Activated CD4-positive, alpha-beta memory T cell treated with anti-CD3 and anti-CD28 coated beads for 36 hours (primary cell): ENCODE measurements at regions of chr10 and their contacts with region 1.

Region 1: GRCh38 chr10:70404036-70404786 is at the start of gene EIF4EBP2:
- DNase-seq: peak; percentile 100
- H3K4me3 Mint-ChIP-seq: peak within 1 kb of the TSS; percentile 95
- H3K27ac Mint-ChIP-seq: peak within 1 kb of the TSS; percentile 91
- H3K4me1 Mint-ChIP-seq: peaks cover 37% of the 10 kb centered on the region
- H3K27me3 Mint-ChIP-seq: no peaks in the 10 kb centered on the region
- total RNA-seq, gene EIF4EBP2: 27.1 to 27.5 TPM

Region 2: DNA sequence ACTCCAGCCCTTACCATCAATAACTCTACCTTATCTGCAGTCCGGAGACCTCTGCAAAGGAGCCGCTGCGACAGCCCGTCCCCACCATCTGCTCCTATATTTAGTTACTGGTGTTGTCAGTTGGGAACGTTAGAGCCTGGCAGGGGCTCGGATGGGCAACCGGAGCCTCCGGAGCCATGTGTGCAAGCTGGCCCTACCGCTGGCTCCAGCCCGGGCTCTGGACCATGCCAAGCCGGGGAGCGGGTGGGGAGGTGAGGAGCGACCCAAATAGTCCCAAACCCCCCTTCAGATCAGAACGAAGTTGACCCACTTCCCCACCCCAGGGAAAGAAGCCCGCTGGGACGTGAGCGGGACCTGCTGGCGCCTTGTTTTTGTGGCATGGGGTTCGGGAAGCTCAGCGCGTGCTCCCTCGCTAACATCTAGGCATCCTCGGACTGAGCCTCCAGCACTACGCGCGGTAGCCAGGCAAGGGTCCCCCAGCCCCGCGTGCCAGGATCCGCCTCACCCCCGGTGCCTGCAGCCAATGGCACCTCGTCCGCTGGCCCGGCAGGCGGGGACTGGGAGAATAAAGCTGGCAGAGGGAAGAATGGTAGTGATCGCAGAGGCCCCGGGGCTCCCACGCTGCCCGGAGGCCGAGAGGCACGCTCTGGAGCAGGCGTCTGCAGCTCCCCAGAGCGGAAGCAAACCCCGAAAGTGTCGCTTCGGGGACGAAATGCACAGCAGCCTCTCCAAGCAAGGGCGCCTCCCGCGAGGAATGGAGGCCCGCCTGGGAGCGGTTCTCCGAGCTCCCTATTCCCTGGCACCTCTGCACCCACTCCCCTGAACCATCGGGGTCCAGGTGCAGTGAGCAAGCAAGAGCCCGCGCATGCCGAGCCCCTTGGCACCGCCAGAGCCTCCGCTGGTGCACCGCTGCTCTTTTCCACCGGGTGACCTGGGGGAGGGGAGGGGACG is 22.5 kb before region 1 on chr10:
- CTCF ChIA-PET with region 1: interaction called, 49 read pairs
- POLR2A ChIA-PET with region 1: interaction called, 13 read pairs
- intact Hi-C with region 1: loop called (anchors 1 kb)
- DNase-seq: peak; percentile 48
- H3K4me3 Mint-ChIP-seq: peak overlapping the region; percentile 77
- H3K27ac Mint-ChIP-seq: no peak overlapping the region
- H3K4me1 Mint-ChIP-seq: no peaks in the 10 kb centered on the region
- H3K27me3 Mint-ChIP-seq: no peaks in the 10 kb centered on the region

Region 3: GRCh38 chr10:70418229-70418628 is 14.0 kb after region 1 on chr10:
- CTCF ChIA-PET with region 1: interaction called, 4 read pairs
- POLR2A ChIA-PET with region 1: interaction called, 17 read pairs
- intact Hi-C with region 1: loop called (anchors 1 kb)
- DNase-seq: peak; percentile 27
- H3K4me3 Mint-ChIP-seq: no peak overlapping the region
- H3K27ac Mint-ChIP-seq: peak overlapping the region; percentile 81
- H3K4me1 Mint-ChIP-seq: peaks cover 33% of the 10 kb centered on the region
- H3K27me3 Mint-ChIP-seq: no peaks in the 10 kb centered on the region

Region 4: GRCh38 chr10:70478191-70479164 is 74.3 kb after region 1 on chr10 and contains the start of gene PALD1:
- CTCF ChIA-PET with region 1: no interaction called
- POLR2A ChIA-PET with region 1: no interaction called
- intact Hi-C with region 1: loop called (anchors 5 kb)
- DNase-seq: peak; percentile 49
- H3K4me3 Mint-ChIP-seq: peak within 1 kb of the TSS; percentile 65
- H3K27ac Mint-ChIP-seq: peak within 1 kb of the TSS; percentile 55
- H3K4me1 Mint-ChIP-seq: peaks cover 32% of the 10 kb centered on the region
- H3K27me3 Mint-ChIP-seq: peaks cover 10% of the 10 kb centered on the region
- total RNA-seq, gene PALD1: 0.41 to 0.48 TPM